ENCODE measurements at regions of chr13 and their contacts with region 1.

Region 1: GRCh38 chr13:77751513-77752456 is 54.3 kb downstream of the SLAIN1 start:
- DNase-seq: peak; percentile 52 to 61 (median 58)
- H3K4me3 ChIP-seq: no peak overlapping the region
- H3K4me3 Mint-ChIP-seq: no peak overlapping the region
- H3K27ac ChIP-seq: no peak overlapping the region
- H3K27ac Mint-ChIP-seq: peak overlapping the region in 2 of 7 donors; percentile 12 to 43
- H3K4me1 ChIP-seq: peaks cover 5% of the 10 kb centered on the region
- H3K4me1 Mint-ChIP-seq: peaks cover 12 to 17% (median 14%) of the 10 kb centered on the region in 4 donors
- H3K27me3 ChIP-seq: no peaks in the 10 kb centered on the region
- H3K27me3 Mint-ChIP-seq: no peaks in the 10 kb centered on the region

Region 2: GRCh38 chr13:77456271-77456670 is 295.5 kb before region 1 on chr13:
- CTCF ChIA-PET with region 1: no interaction called
- POLR2A ChIA-PET with region 1: no interaction called
- intact Hi-C with region 1: no loop called
- DNase-seq: no peak
- H3K4me3 ChIP-seq: no peak overlapping the region
- H3K4me3 Mint-ChIP-seq: peak overlapping the region in 1 of 8 donors; percentile 4
- H3K27ac ChIP-seq: no peak overlapping the region
- H3K27ac Mint-ChIP-seq: no peak overlapping the region
- H3K4me1 ChIP-seq: no peaks in the 10 kb centered on the region
- H3K4me1 Mint-ChIP-seq: no peaks in the 10 kb centered on the region
- H3K27me3 ChIP-seq: no peaks in the 10 kb centered on the region
- H3K27me3 Mint-ChIP-seq: peaks cover 6 to 7% of the 10 kb centered on the region in 2 donors

Region 3: DNA sequence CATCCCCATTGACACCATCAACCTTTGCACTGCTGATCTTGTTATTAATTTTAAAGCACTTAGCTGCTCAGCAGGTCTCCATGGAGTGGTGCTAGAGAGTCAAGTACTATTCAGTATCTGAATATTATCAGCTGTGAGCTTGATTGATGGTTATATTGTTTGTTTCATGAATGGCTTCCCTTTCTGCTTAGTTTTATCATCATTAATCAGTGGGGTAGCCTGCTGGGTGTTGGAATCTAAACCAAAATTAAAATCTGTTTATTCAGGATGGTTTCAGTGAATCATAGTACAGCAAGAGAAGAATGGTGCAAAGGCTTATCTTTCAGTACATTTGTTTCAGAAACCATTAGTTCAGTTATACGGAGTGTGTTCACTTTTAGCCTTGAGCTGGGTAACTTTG is 258.8 kb before region 1 on chr13:
- CTCF ChIA-PET with region 1: interaction called, 11 read pairs
- POLR2A ChIA-PET with region 1: no interaction called
- intact Hi-C with region 1: loop called (anchors 1 kb)
- DNase-seq: peak in 2 of 5 donors; percentile 5 to 7
- H3K4me3 ChIP-seq: no peak overlapping the region
- H3K4me3 Mint-ChIP-seq: no peak overlapping the region
- H3K27ac ChIP-seq: no peak overlapping the region
- H3K27ac Mint-ChIP-seq: no peak overlapping the region
- H3K4me1 ChIP-seq: no peaks in the 10 kb centered on the region
- H3K4me1 Mint-ChIP-seq: no peaks in the 10 kb centered on the region
- H3K27me3 ChIP-seq: no peaks in the 10 kb centered on the region
- H3K27me3 Mint-ChIP-seq: peaks cover 0 to 6% of the 10 kb centered on the region in 2 donors

Region 4: DNA sequence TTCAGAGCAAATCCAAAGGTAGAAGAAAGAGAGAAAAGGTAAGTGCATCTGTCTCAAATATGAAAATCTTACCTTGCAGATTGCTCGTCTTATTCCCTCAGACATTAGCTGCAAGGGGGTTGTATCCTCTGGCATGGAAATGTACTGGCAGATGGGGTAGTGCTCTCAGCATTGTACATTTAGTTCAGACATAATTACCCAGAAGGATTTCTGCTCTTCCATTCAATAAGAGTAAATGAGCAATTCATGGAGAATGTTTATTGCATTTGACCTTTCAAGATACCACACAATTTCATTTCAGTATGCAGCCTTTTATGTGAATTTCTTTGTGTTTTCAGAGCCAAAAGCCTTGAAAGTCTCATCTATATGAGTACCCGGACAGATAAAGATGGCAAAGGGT is 152.4 kb before region 1 on chr13:
- CTCF ChIA-PET with region 1: interaction called, 130 read pairs
- POLR2A ChIA-PET with region 1: no interaction called
- intact Hi-C with region 1: no loop called
- DNase-seq: no peak
- H3K4me3 ChIP-seq: no peak overlapping the region
- H3K4me3 Mint-ChIP-seq: no peak overlapping the region
- H3K27ac ChIP-seq: no peak overlapping the region
- H3K27ac Mint-ChIP-seq: no peak overlapping the region
- H3K4me1 ChIP-seq: no peaks in the 10 kb centered on the region
- H3K4me1 Mint-ChIP-seq: no peaks in the 10 kb centered on the region
- H3K27me3 ChIP-seq: no peaks in the 10 kb centered on the region
- H3K27me3 Mint-ChIP-seq: peaks cover 3 to 8% of the 10 kb centered on the region in 2 donors

Region 5: DNA sequence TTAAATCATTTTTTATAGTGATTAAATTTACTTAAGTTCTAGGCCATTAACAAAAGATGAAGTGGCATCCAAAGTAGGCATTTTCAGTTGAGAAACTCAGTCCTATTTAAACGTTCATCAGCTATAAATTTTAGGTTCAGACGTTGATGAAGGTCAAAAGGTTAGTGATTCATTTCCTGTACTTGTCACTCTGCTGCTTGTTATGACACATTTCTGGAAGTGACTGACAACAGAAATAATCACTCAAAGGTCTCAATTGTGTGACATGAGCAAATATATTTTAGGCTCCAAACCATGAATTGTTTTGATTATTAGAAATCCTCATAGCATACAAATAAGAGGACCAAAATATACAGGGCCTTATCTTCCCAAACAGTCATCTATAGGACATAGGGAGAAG is 177.1 kb after region 1 on chr13:
- CTCF ChIA-PET with region 1: no interaction called
- POLR2A ChIA-PET with region 1: no interaction called
- intact Hi-C with region 1: no loop called
- DNase-seq: no peak
- H3K4me3 ChIP-seq: no peak overlapping the region
- H3K4me3 Mint-ChIP-seq: no peak overlapping the region
- H3K27ac ChIP-seq: no peak overlapping the region
- H3K27ac Mint-ChIP-seq: no peak overlapping the region
- H3K4me1 ChIP-seq: no peaks in the 10 kb centered on the region
- H3K4me1 Mint-ChIP-seq: no peaks in the 10 kb centered on the region
- H3K27me3 ChIP-seq: no peaks in the 10 kb centered on the region
- H3K27me3 Mint-ChIP-seq: peaks cover 11% of the 10 kb centered on the region in 2 donors

Region 6: DNA sequence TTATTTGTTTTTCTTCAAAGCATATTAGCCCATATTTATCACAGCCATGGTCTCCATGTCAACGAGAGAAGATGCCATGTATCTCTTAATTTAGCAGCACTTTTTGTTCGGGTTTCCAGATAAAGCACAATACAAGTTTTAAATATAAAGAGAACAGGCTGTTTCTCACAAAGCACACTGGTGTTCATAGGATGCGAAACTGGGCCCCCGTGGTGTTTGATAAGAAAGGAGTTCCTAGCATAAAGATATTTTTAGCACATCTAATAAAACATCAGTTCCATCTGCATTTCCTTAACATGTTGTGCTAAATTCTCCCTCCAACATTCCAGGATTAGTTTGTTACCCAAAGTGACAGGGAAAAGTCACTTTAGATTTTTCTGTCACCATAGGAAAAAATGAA is 239.2 kb after region 1 on chr13:
- CTCF ChIA-PET with region 1: no interaction called
- POLR2A ChIA-PET with region 1: no interaction called
- intact Hi-C with region 1: no loop called
- DNase-seq: no peak
- H3K4me3 ChIP-seq: no peak overlapping the region
- H3K4me3 Mint-ChIP-seq: no peak overlapping the region
- H3K27ac ChIP-seq: no peak overlapping the region
- H3K27ac Mint-ChIP-seq: no peak overlapping the region
- H3K4me1 ChIP-seq: no peaks in the 10 kb centered on the region
- H3K4me1 Mint-ChIP-seq: no peaks in the 10 kb centered on the region
- H3K27me3 ChIP-seq: no peaks in the 10 kb centered on the region
- H3K27me3 Mint-ChIP-seq: peaks cover 0 to 11% of the 10 kb centered on the region in 2 donors

Region 7: DNA sequence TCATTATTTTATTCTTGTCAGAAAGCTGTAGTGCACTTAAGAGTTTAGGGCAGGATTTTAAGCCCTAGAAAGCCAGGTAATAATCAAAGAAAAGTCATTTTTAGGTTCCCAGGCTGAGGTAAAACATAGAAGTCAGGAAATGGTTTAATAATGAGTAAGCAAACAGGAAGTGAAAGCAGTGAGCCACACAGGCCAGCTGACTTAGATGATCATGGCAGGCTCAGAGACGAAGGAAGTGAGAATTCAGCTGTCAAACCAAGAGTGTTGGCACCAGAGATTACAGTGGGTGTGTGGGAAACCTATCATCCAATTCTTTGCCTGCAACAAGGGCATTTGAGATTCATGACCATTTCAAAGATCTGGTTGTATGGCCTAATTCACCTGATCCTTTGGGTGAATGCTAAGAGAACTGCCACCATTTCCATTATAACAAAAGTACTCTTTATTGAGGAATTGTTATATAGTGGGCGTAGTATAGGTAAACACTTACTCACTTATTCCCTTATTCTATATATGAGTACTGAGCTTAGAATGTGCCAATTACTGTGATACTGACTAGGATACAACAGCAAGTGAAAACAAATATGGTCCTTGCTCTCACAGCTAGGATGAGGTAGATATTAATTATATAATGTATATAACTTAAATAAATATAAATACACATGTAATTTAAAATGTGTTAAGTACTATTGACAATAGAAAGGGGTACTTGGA is 270.5 kb after region 1 on chr13:
- CTCF ChIA-PET with region 1: no interaction called
- POLR2A ChIA-PET with region 1: no interaction called
- intact Hi-C with region 1: no loop called
- DNase-seq: peak; percentile 28 to 49 (median 36)
- H3K4me3 ChIP-seq: no peak overlapping the region
- H3K4me3 Mint-ChIP-seq: peak overlapping the region in 4 of 8 donors; percentile 2 to 55 (median 16)
- H3K27ac ChIP-seq: no peak overlapping the region
- H3K27ac Mint-ChIP-seq: peak overlapping the region; percentile 12 to 87 (median 47)
- H3K4me1 ChIP-seq: peaks cover 12% of the 10 kb centered on the region
- H3K4me1 Mint-ChIP-seq: peaks cover 6 to 12% (median 10%) of the 10 kb centered on the region in 4 donors
- H3K27me3 ChIP-seq: no peaks in the 10 kb centered on the region
- H3K27me3 Mint-ChIP-seq: peaks cover 0 to 11% of the 10 kb centered on the region in 2 donors

Measured in CD4-positive, alpha-beta memory T cell (primary cell).